ENCODE measurements at regions of chr12 and their contacts with region 1.

Region 1: GRCh38 chr12:131773582-131774221 is 54.5 kb upstream of the MMP17 start:
- DNase-seq: peak; percentile 49
- ATAC-seq: peak; percentile 72
- H3K4me3 Mint-ChIP-seq: peak overlapping the region; percentile 84
- H3K27ac Mint-ChIP-seq: peak overlapping the region; percentile 98
- H3K4me1 Mint-ChIP-seq: peaks cover 76% of the 10 kb centered on the region
- H3K27me3 Mint-ChIP-seq: no peaks in the 10 kb centered on the region
- CTCF ChIP-seq: no peak

Region 2: DNA sequence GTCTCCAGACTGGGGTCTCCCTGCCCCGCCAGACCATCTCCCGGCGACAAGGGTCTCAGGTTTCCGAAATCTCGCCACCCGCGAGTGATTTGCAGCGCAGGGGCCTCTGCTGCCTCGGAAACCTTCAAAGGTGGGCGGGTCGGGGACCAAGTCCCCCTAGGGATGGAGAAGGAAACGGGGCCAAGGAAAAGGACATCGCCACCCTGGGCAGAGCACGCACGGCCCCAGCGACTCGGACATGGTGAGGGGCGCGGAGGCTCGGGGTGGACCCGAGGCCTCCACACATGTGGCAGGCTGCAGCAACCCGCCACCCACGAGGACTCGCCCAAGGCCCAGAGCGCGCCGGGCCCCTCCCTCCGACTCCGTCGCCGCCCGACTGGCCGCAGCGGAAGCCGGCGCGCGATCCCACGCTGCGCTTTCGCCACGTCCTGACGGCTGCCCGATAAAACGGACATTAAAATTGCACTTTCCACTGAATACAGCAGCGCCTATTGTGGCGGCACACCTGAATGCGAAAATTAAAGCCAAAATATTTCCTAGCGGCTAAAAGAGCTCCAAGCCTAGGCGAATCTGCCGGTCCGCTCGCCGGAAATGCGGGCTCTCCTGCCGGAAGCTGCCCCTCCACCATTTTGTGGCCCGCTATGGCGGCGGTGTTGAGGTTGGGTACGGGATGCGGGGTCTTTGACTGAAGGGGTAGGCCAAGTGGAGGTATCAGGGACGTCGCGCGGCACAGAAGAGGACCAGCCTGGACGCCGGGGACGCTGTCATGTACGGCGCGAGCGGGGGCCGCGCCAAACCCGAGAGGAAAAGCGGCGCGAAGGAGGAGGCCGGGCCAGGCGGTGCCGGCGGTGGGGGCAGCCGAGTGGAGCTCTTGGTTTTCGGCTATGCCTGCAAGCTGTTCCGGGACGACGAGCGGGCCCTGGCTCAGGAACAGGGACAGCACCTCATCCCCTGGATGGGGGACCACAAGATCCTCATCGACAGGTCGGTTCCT is 62.9 kb before region 1 on chr12 and contains the start of gene SFSWAP:
- CTCF ChIA-PET with region 1: no interaction called
- POLR2A ChIA-PET with region 1: interaction called, 15 read pairs
- intact Hi-C with region 1: loop called (anchors 5 kb)
- DNase-seq: peak; percentile 79
- ATAC-seq: peak; percentile 95
- H3K4me3 Mint-ChIP-seq: peak within 1 kb of the TSS; percentile 93
- H3K27ac Mint-ChIP-seq: peak within 1 kb of the TSS; percentile 98
- H3K4me1 Mint-ChIP-seq: peaks cover 31% of the 10 kb centered on the region
- H3K27me3 Mint-ChIP-seq: no peaks in the 10 kb centered on the region
- CTCF ChIP-seq: no peak
- total RNA-seq, gene SFSWAP: 75.1 and 88.0 TPM in 2 replicates

Region 3: DNA sequence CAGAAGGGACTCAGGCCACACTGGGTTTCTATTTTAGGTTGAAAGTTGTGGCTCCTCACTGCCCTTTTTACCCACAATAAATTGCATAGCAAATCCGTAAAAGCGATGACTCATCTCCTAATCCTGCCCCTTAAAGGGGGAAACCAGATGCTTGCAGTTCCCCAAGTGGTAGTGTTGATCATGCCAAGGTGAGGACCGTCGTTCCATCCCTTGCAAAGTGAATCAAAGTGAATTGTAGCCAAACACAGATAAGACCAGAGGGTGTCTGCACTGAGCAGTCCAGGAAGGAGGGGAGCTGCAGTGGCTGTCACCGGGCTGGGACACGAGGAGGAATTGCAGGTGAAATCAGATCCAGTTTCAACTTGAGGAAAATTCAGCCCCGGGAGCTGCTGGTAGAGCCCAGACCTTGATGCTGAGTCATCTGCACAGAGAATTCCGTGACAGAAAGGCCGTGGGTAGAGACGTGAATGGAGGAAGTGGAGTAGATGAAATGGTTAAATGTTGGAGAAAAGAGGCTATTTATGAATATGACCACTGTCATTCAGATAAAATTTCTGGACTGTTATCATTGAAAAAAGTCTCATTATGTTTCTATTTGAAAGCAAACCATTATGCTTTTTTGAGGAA is 10.3 kb after region 1 on chr12:
- CTCF ChIA-PET with region 1: interaction called, 7 read pairs
- POLR2A ChIA-PET with region 1: interaction called, 11 read pairs
- intact Hi-C with region 1: no loop called
- DNase-seq: no peak
- ATAC-seq: peak; percentile 60
- H3K4me3 Mint-ChIP-seq: no peak overlapping the region
- H3K27ac Mint-ChIP-seq: peak overlapping the region; percentile 82
- H3K4me1 Mint-ChIP-seq: peaks cover 14% of the 10 kb centered on the region
- H3K27me3 Mint-ChIP-seq: no peaks in the 10 kb centered on the region
- CTCF ChIP-seq: no peak

Region 4: DNA sequence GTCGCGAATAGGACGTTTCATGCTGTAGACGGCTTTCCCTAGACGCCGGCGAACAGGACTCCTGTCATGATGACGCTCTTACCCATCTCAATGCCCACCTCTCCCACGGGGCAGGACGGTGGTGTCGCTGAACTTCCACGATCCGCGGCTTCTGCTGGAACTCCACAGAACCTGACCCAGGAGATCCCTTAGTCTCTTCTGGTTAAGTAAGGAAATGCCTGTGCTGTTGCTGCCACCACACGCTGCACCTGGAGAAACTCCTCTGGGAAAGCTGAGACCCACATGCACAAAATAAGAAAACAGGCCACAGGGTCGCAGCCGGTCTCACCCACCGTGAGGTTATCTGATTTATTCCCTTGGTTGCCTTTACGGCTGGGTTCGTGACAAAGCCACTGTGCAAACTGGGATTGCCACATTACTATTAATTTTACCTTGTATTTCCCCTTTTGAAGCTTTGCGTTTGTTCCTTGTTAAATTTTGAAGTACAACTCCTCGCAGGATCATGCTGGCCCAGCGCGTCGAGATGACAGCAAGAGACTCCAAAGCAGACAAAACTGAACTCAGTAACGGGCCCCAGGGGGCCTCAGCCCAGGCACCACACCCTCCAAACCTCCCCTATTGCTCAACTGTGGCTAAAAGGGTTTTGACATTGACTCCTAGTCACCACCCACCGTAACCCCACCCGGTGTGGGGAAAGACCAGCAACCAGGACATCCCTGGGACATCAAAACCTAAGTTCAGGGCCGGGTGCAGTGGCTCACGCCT is 45.3 kb after region 1 on chr12:
- CTCF ChIA-PET with region 1: no interaction called
- POLR2A ChIA-PET with region 1: interaction called, 16 read pairs
- intact Hi-C with region 1: no loop called
- DNase-seq: no peak
- ATAC-seq: peak; percentile 81
- H3K4me3 Mint-ChIP-seq: peak overlapping the region; percentile 52
- H3K27ac Mint-ChIP-seq: peak overlapping the region; percentile 68
- H3K4me1 Mint-ChIP-seq: peaks cover 41% of the 10 kb centered on the region
- H3K27me3 Mint-ChIP-seq: no peaks in the 10 kb centered on the region
- CTCF ChIP-seq: no peak

Region 5: GRCh38 chr12:131971226-131971625 is 197.5 kb after region 1 on chr12:
- CTCF ChIA-PET with region 1: no interaction called
- POLR2A ChIA-PET with region 1: no interaction called
- intact Hi-C with region 1: no loop called
- DNase-seq: no peak
- ATAC-seq: no peak
- H3K4me3 Mint-ChIP-seq: no peak overlapping the region
- H3K27ac Mint-ChIP-seq: no peak overlapping the region
- H3K4me1 Mint-ChIP-seq: peaks cover 24% of the 10 kb centered on the region
- H3K27me3 Mint-ChIP-seq: no peaks in the 10 kb centered on the region
- CTCF ChIP-seq: no peak